ENCODE measurements at regions of chr16 and their contacts with region 1.

Region 1: DNA sequence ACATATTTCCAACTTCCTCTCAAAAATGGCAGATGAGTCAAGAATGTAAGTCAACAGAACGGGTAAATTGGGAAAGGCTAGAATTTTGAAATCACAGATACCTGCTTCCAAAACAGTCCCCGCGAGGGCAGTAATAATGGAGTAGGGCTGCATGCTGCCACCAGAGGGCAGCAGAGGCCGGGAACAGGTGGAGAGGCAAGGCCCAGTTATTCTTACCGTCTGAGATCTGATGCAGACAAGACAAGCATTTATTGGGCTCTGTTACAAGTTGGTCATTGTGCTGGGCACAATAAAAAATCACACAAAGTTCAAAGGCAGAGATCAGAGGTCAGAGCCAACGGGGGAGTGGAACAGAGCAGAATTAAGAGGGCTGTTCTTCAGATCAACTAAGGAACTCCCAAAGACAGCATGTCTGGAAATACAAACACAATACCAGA is 8.8 kb upstream of the MLKL start:
- DNase-seq: peak; percentile 61
- ATAC-seq: peak; percentile 96
- H3K4me3 ChIP-seq: no peak overlapping the region
- H3K27ac ChIP-seq: no peak overlapping the region
- H3K4me1 ChIP-seq: no peaks in the 10 kb centered on the region
- H3K27me3 ChIP-seq: no peaks in the 10 kb centered on the region
- CTCF ChIP-seq: peak; percentile 92

Region 2: DNA sequence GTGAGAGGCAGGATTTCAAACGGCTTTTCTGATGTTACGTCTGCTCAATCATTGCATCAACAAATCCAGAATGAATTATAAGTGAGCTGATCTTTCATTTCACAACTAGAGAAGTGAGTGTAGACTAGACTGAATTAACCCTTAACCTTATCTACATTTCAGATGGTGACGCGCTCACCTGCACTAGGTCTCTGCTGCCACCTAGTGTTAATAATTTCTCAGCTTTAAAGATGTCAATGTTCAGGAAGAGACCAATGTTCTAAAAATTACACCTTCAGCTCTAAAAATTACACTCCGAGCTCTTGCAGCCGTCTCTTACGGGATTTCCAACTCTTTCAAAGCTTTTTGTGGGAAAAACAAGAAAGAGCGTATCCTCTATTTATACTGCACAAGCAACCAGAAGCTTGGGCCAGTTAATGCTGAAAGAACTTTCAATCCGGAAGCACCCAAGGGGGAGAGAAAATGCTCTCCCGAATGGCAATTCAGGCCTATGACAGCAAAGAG is 153.3 kb after region 1 on chr16:
- CTCF ChIA-PET with region 1: interaction called, 7 read pairs
- POLR2A ChIA-PET with region 1: no interaction called
- in situ Hi-C with region 1: no loop called
- intact Hi-C with region 1: loop called (anchors 1 kb)
- DNase-seq: peak; percentile 22
- ATAC-seq: peak; percentile 71
- H3K4me3 ChIP-seq: no peak overlapping the region
- H3K27ac ChIP-seq: no peak overlapping the region
- H3K4me1 ChIP-seq: no peaks in the 10 kb centered on the region
- H3K27me3 ChIP-seq: no peaks in the 10 kb centered on the region
- CTCF ChIP-seq: peak; percentile 82